ENCODE measurements at regions of chr1 and their contacts with region 1.

Region 1: GRCh38 chr1:27392096-27392777 is at the start of gene GPR3:
- DNase-seq: peak; percentile 79
- ATAC-seq: peak; percentile 84
- H3K4me3 ChIP-seq: peak within 1 kb of the TSS; percentile 71 to 85 (median 72)
- H3K27ac ChIP-seq: peak within 1 kb of the TSS; percentile 9
- H3K4me1 ChIP-seq: peaks cover 28% of the 10 kb centered on the region
- H3K27me3 ChIP-seq: peaks cover 0 to 1% of the 10 kb centered on the region in 2 experiments; a peak in 2 of 5 replicates
- CTCF ChIP-seq: peak; percentile 89
- EP300 ChIP-seq: 0 out of 4 replicates have a peak, but pooled peaks of 1 of the 2 experiments have one; percentile 13
- POLR2A ChIP-seq: no peak; a peak in 1 of 4 replicates
- RAD21 ChIP-seq: no peak
- total RNA-seq, gene GPR3: 0.88 and 1.00 TPM in 2 replicates

Region 2: DNA sequence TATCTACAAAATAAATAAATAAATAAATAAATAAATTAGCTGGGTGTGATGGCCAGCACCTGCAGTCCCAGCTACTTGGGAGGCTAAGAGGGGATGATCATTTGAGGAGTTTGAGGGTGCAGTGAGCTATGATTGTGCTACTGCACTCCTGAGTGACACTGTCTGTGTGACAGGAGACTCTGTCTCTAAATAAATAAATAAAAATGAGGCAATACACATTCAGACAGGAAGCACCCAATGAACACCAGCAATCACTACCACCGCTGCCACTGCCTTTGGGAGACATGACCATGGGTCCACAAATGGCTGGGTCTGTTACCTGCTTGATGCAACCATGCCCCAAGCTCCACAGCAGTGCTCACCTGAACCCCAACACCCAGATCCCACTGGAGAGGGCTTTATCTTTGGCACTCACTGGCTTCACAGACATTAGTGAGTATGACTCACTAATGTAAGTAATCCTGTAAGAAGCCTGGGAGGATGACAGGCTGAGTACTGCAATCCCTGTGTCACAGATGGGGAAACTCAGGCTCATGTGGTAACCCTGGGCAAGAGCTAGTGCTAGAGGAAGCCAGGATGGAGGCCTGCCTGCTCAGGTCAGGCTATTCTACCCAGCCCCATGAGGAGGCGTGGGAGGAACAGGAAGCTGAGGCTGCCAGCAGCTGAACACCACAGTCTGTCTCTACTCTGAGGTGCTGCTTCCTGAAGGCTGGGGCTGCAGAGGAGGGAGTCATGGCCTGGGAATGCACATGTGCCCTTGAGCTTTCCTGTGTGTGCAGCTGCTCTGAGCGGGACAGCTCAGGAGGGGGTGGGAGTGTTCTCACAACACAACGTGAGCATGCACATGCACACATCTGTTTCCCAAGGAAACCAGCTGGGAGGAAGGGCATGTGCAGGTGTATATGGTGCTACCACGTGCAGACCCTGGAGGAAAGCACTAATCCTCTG is 280.3 kb before region 1 on chr1:
- CTCF ChIA-PET with region 1: no interaction called
- POLR2A ChIA-PET with region 1: no interaction called
- in situ Hi-C with region 1: loop called (anchors 5 kb)
- intact Hi-C with region 1: no loop called
- DNase-seq: peak; percentile 73
- ATAC-seq: peak; percentile 84
- H3K4me3 ChIP-seq: no peak overlapping the region
- H3K27ac ChIP-seq: no peak overlapping the region
- H3K4me1 ChIP-seq: peaks cover 24% of the 10 kb centered on the region
- H3K27me3 ChIP-seq: no peaks in the 10 kb centered on the region
- CTCF ChIP-seq: peak; percentile 62
- EP300 ChIP-seq: no peak
- POLR2A ChIP-seq: no peak
- RAD21 ChIP-seq: peak; percentile 35; the same call in 1 of the 2 replicates

Region 3: DNA sequence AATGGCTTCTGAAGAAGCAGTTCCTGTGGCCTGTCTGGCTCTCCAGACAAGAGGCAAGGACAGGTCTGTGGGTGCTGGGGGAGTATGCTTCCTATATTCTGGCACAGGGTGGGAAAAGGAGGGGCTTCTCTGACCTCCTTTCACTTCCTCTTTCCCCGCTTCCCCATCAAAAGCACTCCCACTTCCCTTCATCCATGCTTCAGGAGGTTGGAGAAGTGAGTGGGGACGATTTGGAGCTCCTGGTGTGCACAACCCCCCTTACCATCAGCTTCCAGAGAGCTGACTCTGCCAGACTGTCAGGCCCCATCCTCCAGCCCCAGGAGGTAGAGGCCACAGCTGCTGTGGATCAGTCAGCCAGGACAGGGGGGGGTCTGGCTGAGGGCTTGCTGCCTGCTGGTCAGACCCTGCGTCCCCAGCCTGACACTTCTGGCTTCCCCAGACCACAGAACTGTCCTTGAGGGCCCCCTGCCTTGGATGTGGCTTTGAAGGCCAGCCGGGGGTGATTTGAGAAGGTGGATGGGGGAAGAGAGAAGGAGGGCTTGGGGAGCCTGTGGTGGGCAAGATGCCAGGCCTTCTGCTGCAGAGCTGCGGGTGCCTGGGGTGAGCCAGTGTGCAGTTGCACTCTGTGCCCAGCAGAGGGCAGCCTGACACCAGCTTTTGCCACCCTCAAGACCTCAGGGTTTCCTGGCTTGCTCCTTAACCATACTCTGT is 91.7 kb before region 1 on chr1:
- CTCF ChIA-PET with region 1: interaction called, 43 read pairs
- POLR2A ChIA-PET with region 1: interaction called, 3 read pairs
- in situ Hi-C with region 1: loop called (anchors 5 kb)
- intact Hi-C with region 1: loop called (anchors 1 kb)
- DNase-seq: peak; percentile 61
- ATAC-seq: peak; percentile 86
- H3K4me3 ChIP-seq: no peak overlapping the region
- H3K27ac ChIP-seq: no peak overlapping the region
- H3K4me1 ChIP-seq: no peaks in the 10 kb centered on the region
- H3K27me3 ChIP-seq: no peaks in the 10 kb centered on the region
- CTCF ChIP-seq: peak; percentile 98
- EP300 ChIP-seq: no peak
- POLR2A ChIP-seq: no peak
- RAD21 ChIP-seq: peak; percentile 93

Region 4: GRCh38 chr1:27357281-27358037 is 34.8 kb before region 1 on chr1:
- CTCF ChIA-PET with region 1: interaction called, 19 read pairs
- POLR2A ChIA-PET with region 1: no interaction called
- in situ Hi-C with region 1: loop called (anchors 5 kb)
- intact Hi-C with region 1: loop called (anchors 1 kb)
- DNase-seq: peak; percentile 43
- ATAC-seq: peak; percentile 83
- H3K4me3 ChIP-seq: peak overlapping the region in 2 of 3 experiments; percentile 33 to 61; a peak in 3 of 6 replicates
- H3K27ac ChIP-seq: no peak overlapping the region
- H3K4me1 ChIP-seq: peaks cover 8% of the 10 kb centered on the region; the same call in 1 of the 2 replicates
- H3K27me3 ChIP-seq: no peaks in the 10 kb centered on the region
- CTCF ChIP-seq: peak; percentile 95
- EP300 ChIP-seq: no peak
- POLR2A ChIP-seq: no peak
- RAD21 ChIP-seq: peak; percentile 85

Region 5: DNA sequence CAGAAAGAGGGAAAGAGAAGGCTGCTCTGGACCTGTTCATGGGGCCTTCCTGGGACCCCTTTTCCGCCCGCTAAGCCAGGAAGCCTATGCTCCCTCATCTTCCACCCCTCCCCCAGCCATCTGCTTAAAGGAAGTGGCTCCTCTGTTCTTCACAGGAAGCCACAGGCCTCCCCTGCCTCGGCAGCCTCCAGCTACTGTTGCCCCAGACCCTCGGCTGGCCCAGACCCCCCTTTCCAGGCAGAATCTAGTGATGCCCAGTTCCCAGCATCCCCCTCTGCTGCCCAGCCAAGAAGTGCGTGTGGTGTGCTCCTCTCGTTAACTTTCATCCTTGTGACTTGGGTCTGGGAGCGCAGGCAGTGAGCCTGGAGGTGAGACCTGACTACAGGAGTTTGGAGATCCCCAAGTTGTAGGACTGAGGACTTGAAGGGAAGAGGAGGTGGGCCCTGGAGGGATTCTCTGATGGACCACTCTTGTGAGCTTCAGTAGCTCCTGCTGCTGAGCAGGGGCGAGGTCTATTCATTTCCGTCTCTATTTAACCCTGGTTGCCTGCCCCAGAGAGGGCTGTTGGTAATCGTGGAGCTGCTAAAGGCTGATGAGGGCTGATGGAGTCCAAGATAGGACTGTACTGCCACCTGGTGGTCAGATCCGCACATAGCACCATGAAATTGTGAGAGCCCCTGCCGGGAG is 270.6 kb after region 1 on chr1:
- CTCF ChIA-PET with region 1: no interaction called
- POLR2A ChIA-PET with region 1: no interaction called
- in situ Hi-C with region 1: no loop called
- intact Hi-C with region 1: loop called (anchors 10 kb)
- DNase-seq: peak; percentile 73
- ATAC-seq: peak; percentile 83
- H3K4me3 ChIP-seq: peak overlapping the region in 2 of 3 experiments; percentile 7 to 35; a peak in 1 of 6 replicates
- H3K27ac ChIP-seq: no peak overlapping the region
- H3K4me1 ChIP-seq: peaks cover 32% of the 10 kb centered on the region
- H3K27me3 ChIP-seq: peaks cover 1 to 6% of the 10 kb centered on the region in 2 experiments; a peak in 1 of 5 replicates
- CTCF ChIP-seq: peak; percentile 88
- EP300 ChIP-seq: no peak
- POLR2A ChIP-seq: no peak
- RAD21 ChIP-seq: peak; percentile 93